ENCODE measurements at regions of chrX and their contacts with region 1.

Region 1: GRCh38 chrX:2690856-2691542 is at the start of gene CD99:
- DNase-seq: peak; percentile 98
- H3K4me3 ChIP-seq: peak within 1 kb of the TSS; percentile 100
- H3K27ac ChIP-seq: peak within 1 kb of the TSS; percentile 97
- H3K4me1 ChIP-seq: peaks cover 28% of the 10 kb centered on the region
- H3K27me3 ChIP-seq: no peaks in the 10 kb centered on the region
- CTCF ChIP-seq: no peak
- total RNA-seq, gene CD99: 1,443 and 1,572 TPM in 2 replicates

Region 2: DNA sequence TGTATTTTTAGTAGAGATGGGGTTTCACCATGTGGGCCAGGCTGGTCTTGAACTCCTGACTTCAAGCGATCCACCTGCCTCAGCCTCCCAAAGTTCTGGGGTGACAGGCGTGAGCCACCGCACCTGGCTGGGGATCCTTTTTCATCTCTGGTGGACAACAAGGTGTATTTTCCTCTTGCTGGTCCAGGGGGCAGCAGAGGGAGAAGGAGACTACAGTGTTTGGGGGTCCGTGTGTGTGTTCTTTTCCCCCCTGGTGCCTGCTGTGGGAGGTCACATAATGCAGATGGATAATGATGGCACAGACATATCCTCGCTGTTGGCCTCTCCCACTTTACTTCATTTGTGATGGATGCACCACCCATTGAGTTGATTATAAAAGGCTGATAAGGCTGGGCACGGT is 38.9 kb before region 1 on chrX:
- CTCF ChIA-PET with region 1: no interaction called
- POLR2A ChIA-PET with region 1: no interaction called
- intact Hi-C with region 1: loop called (anchors 5 kb)
- DNase-seq: no peak
- H3K4me3 ChIP-seq: no peak overlapping the region
- H3K27ac ChIP-seq: no peak overlapping the region
- H3K4me1 ChIP-seq: peaks cover 10% of the 10 kb centered on the region
- H3K27me3 ChIP-seq: no peaks in the 10 kb centered on the region
- CTCF ChIP-seq: peak; percentile 38; the same call in 1 of the 2 replicates

Region 3: DNA sequence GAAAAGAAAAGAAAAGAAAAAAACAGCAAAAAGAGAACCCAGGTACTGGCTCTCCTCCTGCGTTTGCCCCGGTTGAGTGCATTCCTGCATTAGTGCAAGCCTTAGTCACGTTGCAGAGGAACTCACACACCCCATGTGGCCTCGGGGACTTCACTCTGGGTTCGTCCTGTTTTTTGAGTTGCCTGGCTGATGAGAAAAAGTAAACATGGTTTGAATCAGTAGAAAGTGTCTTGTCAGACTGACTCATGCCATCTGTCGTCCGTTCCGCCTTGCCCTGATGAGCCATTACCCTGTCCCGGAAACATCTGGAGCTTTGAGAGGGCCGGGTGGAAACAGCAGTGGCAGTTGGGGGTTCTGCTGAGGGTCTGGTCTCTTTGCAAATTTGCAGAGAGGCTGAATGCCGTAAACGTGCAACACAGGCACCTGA is 16.3 kb after region 1 on chrX:
- CTCF ChIA-PET with region 1: no interaction called
- POLR2A ChIA-PET with region 1: no interaction called
- intact Hi-C with region 1: loop called (anchors 2 kb)
- DNase-seq: peak; percentile 99
- H3K4me3 ChIP-seq: peak overlapping the region; percentile 10
- H3K27ac ChIP-seq: peak overlapping the region; percentile 92
- H3K4me1 ChIP-seq: peaks cover 91% of the 10 kb centered on the region
- H3K27me3 ChIP-seq: no peaks in the 10 kb centered on the region
- CTCF ChIP-seq: 0 out of 2 replicates have a peak, but pooled peaks have one; percentile 10